ENCODE measurements at regions of chr3 and their contacts with region 1.

Region 1: GRCh38 chr3:43769471-43770425 is 79.0 kb downstream of the ABHD5 start:
- DNase-seq: peak; percentile 91 to 99
- H3K4me3 ChIP-seq: peak overlapping the region; percentile 6 to 48
- H3K27ac ChIP-seq: peak overlapping the region; percentile 92 to 94
- H3K4me1 ChIP-seq: peaks cover 7 to 32% of the 10 kb centered on the region in 2 donors
- H3K27me3 ChIP-seq: no peaks in the 10 kb centered on the region
- CTCF ChIP-seq: peak; percentile 89 to 91 (median 90)

Region 2: DNA sequence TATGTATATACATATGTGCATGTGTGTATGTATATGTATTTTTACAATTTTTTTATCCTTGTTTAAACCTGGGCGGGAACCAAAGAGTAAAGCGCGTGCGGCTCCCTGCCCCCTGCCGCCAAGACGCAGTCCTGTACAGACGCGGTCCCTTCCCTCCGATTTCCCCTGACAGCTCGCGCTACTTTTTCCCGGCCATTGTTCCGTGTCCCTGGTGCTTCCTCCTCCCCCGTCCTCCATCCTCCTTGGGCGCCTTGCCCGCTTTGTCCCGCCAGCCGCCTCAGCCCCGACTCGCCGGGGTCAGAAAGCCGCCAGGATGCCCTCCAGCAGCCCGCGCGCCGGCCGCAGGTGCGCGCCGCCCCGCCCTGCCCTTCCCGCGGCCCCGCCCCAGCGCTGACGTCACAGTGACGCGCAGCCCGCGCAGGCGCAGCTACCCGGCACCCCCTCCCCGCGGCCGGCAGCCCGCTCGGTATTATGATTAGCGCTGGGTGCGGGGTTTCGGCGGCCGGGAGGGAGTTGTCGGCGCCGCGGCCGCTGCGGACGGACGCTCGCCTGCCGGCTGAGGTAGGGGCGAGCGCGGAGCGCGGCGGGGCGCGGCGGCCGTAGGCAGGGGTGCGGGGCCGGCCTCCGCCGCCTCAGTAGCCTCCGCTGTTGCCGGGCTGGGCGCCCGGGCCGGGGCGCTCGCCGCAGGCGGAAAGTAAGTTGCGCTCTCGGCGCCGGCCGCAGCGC is 483.5 kb before region 1 on chr3 and contains the start of gene SNRK:
- intact Hi-C with region 1: loop called (anchors 5 kb)
- DNase-seq: peak; percentile 20 to 91
- H3K4me3 ChIP-seq: peak within 1 kb of the TSS; percentile 79 to 86
- H3K27ac ChIP-seq: peak within 1 kb of the TSS; percentile 58 to 84
- H3K4me1 ChIP-seq: peaks cover 0 to 12% of the 10 kb centered on the region in 2 donors
- H3K27me3 ChIP-seq: no peaks in the 10 kb centered on the region
- CTCF ChIP-seq: peak in 2 of 3 experiments; percentile 8 to 31
- total RNA-seq, gene SNRK: 44.3 TPM

Region 3: DNA sequence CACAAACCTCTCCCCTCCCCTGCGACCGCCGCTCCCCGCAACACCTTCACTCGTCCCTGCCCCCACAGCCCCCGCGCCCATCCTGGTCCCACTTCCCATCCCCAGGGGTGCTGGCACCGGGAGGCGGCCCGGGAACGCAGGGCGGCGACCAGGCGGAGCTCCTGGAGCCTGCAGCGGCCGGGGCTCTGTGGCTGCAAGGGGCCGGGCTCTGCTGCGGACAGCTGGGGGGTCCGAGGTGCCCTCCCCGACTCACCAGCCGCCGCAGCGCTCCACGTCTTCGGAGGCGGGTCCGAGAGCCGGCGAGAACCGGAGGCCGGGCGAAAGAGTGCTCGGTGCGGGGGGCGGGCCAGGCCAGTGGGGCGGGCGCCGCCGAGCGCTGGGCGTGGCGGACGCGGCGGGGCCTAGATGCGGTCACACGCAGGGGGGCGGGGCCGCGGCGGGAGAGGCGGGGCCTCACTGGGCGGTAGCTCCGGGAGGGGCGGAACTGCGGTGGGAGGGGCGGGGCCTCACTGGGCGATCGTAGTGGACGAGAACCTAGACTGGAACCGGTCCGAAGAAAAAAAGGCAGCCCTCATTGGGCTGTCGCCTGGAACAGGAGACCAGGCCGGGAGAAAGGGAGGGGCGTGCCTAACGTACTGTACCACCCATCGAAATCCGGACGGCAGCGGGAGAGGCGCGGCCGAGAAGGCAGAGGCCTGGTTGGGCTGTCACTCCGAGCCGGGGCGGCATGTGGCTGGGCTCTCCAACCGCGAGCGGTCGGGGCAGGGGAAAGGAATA is 147.9 kb before region 1 on chr3 and contains the start of gene ANO10:
- intact Hi-C with region 1: loop called (anchors 1 kb)
- DNase-seq: peak; percentile 97 to 99
- H3K4me3 ChIP-seq: peak within 1 kb of the TSS; percentile 60 to 97
- H3K27ac ChIP-seq: peak within 1 kb of the TSS; percentile 88 to 92
- H3K4me1 ChIP-seq: peaks cover 0 to 10% of the 10 kb centered on the region in 2 donors
- H3K27me3 ChIP-seq: no peaks in the 10 kb centered on the region
- CTCF ChIP-seq: no peak
- total RNA-seq, gene ANO10: 24.9 TPM

Region 4: GRCh38 chr3:43723121-43723734 is 46.5 kb before region 1 on chr3:
- intact Hi-C with region 1: loop called (anchors 2 kb)
- DNase-seq: no peak
- H3K4me3 ChIP-seq: no peak overlapping the region
- H3K27ac ChIP-seq: peak overlapping the region; percentile 80 to 90
- H3K4me1 ChIP-seq: peaks cover 7 to 9% of the 10 kb centered on the region in 2 donors
- H3K27me3 ChIP-seq: no peaks in the 10 kb centered on the region
- CTCF ChIP-seq: no peak

Region 5: DNA sequence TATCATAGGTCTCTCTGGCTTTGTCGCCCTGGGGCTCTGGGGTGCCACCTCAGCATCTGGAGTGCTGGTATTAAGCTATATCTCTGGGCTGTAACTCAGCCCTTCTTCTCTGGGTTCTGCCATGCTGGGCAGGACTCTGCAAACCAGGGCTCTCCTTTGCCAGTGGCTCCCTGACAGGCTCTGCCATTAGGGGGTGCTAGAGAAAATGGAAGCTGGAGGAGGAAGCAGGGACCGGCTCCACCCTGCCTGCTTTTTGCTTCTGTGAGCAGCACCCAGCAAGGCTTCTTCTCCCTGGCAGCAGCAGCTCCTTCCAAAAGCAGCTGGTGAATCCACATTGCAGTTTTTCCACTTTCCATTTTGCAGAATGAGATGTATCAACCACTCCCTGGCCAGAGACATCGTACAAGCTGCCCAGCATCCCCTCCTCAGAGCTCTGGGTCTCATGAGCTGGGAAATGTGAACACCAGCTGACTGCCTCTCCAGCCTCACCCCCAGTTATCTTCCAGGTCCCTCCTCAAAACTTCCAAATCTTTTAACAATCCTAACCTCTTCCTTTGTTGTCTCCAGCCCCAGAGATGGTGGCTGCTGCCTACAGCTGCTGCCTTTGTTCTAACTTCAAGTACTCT is 86.0 kb after region 1 on chr3:
- intact Hi-C with region 1: loop called (anchors 5 kb)
- DNase-seq: peak in 1 of 2 donors; percentile 83
- H3K4me3 ChIP-seq: no peak overlapping the region
- H3K27ac ChIP-seq: no peak overlapping the region
- H3K4me1 ChIP-seq: peaks cover 0 to 6% of the 10 kb centered on the region in 2 donors
- H3K27me3 ChIP-seq: no peaks in the 10 kb centered on the region
- CTCF ChIP-seq: peak; percentile 26 to 67 (median 61)

Region 6: DNA sequence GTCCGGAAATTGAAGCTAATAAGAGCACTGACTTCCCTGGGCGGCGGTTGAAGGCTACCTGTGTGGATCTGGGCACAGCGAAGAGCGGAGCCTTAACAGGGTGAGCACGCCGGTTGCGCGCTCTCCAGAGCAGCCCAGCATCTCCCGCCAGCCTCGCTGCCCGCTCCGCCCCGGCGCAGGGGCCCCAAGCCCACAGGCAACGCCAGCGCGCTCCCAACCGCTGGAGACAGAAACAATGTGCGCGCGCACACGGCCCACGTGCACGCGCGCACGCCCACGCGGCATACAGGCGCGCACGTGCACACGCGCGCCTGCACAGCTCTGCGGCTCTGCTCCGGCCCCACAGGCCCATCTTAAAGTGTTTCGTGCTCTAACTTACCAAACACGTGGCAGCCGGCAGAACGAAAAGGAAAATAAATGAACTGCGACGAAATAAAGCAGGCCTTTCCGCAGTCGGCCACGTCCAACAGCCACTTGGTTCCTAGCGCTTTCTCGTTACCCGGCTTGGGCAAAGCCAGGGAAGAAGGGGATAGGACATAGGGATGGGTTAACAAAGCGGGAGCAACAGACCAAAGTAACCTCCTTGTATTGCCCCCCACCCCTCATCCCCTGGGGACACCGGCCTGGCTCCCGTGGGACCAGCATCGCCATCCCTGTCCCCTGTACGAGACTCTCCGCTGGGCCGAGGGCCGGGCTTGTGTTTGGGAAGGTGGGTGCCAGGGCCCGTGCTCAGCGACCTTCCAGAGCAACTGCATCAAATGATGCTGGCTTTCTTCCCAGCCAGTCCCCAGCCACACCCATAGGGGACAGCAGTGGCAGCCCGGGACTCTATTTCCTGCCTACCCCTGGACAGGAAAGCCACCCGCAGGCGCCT is 124.7 kb after region 1 on chr3:
- intact Hi-C with region 1: loop called (anchors 2 kb)
- DNase-seq: peak in 1 of 2 donors; percentile 80
- H3K4me3 ChIP-seq: peak overlapping the region; percentile 47 to 64
- H3K27ac ChIP-seq: peak overlapping the region; percentile 54 to 74
- H3K4me1 ChIP-seq: no peaks in the 10 kb centered on the region
- H3K27me3 ChIP-seq: no peaks in the 10 kb centered on the region
- CTCF ChIP-seq: no peak

Region 7: DNA sequence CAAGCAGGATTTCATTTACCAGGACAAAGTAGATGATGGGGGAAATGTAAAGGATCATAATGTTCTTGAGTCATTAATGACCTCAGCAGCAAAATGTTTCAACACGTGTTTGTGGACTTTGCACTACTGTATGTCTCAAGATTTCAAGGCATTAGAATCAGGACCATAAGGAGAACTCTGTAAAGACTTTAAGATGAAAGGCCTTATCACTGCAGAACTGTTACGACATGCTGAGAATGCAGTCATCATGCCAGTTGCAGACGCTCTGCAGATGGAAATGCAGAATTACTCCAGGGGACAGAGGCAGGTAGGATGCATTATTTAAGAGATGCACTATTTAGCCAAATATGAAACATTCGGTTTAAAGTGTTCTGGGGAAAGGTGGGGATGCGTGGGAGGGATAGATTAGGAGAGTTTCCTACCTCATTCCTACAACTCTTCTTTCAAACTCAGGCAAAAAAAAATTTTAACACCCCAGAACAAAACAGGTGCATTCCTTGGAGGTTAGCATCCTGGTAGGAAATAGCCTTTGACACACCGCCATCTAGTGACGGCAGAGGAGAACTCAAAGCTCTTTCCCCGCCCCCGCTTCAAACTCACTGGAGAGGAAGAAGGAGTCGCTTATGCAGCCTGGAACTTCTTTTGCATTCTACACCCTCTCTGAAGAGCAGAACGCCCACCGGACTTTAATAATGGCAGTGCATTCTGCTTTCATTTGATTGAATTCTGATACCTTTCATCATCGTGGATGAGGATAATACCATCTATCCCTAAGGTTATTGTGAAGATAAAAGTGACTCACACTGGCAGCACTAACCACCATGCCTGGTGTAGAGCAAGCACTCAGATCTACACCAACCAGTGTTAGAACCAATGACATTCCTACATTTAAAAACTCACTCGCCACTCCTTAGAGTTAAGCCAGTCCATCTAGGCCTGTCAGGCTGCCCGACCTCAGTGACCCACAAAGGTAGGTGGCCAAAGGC is 428.8 kb after region 1 on chr3:
- intact Hi-C with region 1: loop called (anchors 5 kb)
- DNase-seq: peak in 1 of 2 donors; percentile 82
- H3K4me3 ChIP-seq: no peak overlapping the region
- H3K27ac ChIP-seq: no peak overlapping the region
- H3K4me1 ChIP-seq: no peaks in the 10 kb centered on the region
- H3K27me3 ChIP-seq: no peaks in the 10 kb centered on the region
- CTCF ChIP-seq: peak; percentile 67 to 79 (median 79)

Measured in ascending aorta (tissue), 2 donors.